ENCODE measurements at regions of chr12 and their contacts with region 1.

Region 1: GRCh38 chr12:85575120-85576096 is 260.8 kb downstream of the RASSF9 start:
- DNase-seq: peak in 3 of 6 donors; percentile 11 to 61 (median 38)
- ATAC-seq: peak; percentile 72 to 94 (median 87)
- H3K4me3 ChIP-seq: no peak overlapping the region
- H3K27ac ChIP-seq: no peak overlapping the region
- H3K4me1 ChIP-seq: no peaks in the 10 kb centered on the region
- H3K27me3 ChIP-seq: no peaks in the 10 kb centered on the region
- CTCF ChIP-seq: peak; percentile 39 to 61 (median 55)

Region 2: DNA sequence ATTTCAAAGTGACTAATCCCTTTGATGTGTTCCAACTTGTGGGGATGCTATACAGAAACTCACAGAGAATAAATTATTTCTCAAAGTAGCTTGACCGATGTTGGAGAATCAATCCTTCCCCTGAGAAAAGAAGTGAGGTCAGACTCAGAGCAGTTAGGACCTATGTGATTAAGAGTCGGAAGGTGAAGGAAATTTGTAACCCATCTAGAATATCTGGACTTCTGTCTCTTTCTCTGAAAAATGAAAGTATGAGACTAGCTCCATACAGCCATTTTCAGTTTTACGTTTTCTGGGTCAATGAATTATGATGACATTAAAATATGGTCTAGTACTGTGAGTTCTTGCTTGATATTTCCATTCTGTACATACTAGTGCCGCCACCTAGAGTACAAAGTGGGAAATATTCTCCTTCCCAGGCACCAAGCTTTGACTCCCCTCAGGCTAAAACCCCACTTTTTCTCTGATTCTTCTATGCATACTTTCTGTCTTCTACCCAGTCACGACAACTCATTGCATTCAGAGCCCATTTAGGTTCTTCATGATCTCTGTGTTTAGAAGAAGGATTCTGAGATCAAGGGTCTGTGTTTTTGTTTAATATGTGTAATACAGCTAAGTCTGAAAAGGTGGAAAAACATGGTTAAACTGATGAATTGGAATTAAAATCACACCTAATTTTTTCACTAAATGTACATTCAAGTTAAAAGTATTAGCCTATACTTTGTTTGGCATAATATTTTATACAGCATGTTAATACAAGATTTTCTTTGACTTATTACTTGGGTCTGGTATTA is 291.8 kb after region 1 on chr12:
- intact Hi-C with region 1: loop called (anchors 5 to 10 kb)
- DNase-seq: peak in 2 of 6 donors; percentile 15 to 66
- ATAC-seq: peak; percentile 74 to 95 (median 94)
- H3K4me3 ChIP-seq: no peak overlapping the region
- H3K27ac ChIP-seq: no peak overlapping the region
- H3K4me1 ChIP-seq: peaks cover 0 to 3% (median 0%) of the 10 kb centered on the region in 3 donors
- H3K27me3 ChIP-seq: no peaks in the 10 kb centered on the region
- CTCF ChIP-seq: peak; percentile 61 to 78 (median 69)